Mammary epithelial cell (primary cell): ENCODE measurements at regions of chr9 and their contacts with region 1.

Region 1: GRCh38 chr9:100598641-100599145 is 20.8 kb downstream of the CAVIN4 start:
- DNase-seq: peak; percentile 78
- H3K4me3 ChIP-seq: peak overlapping the region; percentile 46 to 71 (median 54)
- H3K27ac ChIP-seq: no peak overlapping the region
- H3K4me1 ChIP-seq: peaks cover 11% of the 10 kb centered on the region
- H3K27me3 ChIP-seq: no peaks in the 10 kb centered on the region
- CTCF ChIP-seq: no peak

Region 2: DNA sequence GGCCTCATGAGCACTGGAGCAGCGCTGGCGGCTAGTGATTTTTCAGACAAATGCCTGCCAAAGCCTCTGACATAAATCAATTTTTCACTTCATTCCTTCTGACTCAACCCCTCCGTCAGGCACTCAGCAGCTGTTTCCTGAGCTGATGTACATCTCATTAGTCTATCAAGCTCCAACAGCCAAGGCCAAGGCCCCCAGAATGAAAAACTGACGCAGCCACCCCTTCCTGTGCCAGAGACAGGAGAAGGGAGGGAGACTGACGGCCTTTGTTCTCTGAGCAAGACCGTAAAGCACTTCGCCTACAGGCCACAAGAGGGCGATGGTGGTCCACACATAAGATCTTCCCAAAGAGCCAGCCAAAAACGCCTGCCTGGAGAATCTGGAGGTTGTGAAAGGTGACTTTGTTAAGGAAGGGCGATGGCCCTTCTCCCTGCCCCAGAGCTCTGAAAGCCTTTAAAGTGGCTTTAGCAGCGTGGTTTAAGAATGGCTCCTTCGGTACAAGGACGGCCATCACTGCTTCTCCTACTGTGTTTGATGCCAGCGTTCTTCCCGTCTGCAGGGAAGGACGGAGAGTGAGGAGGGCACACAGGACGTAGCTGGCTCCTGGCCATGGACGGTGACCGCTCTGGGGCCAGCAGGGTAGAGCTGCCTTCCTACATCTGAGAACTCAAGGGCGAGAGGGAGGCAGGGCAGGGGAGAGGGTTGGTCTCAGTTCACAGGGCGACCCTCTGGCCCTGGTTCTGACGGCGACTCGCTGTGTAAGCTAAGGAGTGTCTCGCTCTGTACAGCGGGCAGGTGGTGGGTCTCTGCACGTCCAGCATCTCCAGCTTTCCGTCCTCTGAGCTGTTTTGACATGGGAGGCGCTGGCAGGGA is 1414.0 kb before region 1 on chr9:
- CTCF ChIA-PET with region 1: no interaction called
- dilution Hi-C with region 1: no loop called
- in situ Hi-C with region 1: no loop called
- intact Hi-C with region 1: loop called (anchors 1 kb)
- DNase-seq: peak; percentile 77
- H3K4me3 ChIP-seq: no peak overlapping the region
- H3K27ac ChIP-seq: no peak overlapping the region
- H3K4me1 ChIP-seq: no peaks in the 10 kb centered on the region
- H3K27me3 ChIP-seq: no peaks in the 10 kb centered on the region
- CTCF ChIP-seq: peak; percentile 95

Region 3: DNA sequence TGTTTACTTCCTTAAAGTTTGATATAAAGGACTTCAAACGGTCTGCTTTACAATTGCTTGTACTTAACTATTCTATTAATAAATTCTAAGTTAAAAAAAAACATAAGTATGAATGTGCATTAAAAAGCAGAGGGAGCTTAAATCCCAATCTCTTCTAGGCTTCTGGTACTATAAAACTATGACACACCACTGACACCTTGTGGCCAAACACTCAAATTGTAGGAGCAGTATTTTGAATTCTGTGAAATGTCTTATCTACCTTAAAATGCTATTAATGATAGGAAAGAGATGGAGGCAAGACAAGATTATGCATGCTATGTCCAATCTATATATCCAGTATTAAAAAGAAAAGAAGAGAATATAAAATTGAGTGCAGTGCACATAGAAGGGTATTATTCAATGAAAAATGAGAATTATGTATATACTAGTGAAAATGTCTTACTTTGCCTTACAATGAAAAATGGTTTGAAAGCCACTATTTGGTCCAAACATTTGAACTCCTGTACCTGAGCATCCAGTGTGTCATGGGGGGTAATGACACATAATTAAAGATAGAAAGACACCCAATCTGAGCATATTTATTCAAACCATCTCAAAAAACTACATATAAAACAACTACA is 587.5 kb before region 1 on chr9:
- CTCF ChIA-PET with region 1: no interaction called
- dilution Hi-C with region 1: no loop called
- in situ Hi-C with region 1: loop called in 1 of 2 experiments (anchors 25 kb)
- intact Hi-C with region 1: no loop called
- DNase-seq: peak; percentile 29
- H3K4me3 ChIP-seq: no peak overlapping the region
- H3K27ac ChIP-seq: no peak overlapping the region
- H3K4me1 ChIP-seq: no peaks in the 10 kb centered on the region
- H3K27me3 ChIP-seq: no peaks in the 10 kb centered on the region
- CTCF ChIP-seq: peak; percentile 60 to 69

Region 4: GRCh38 chr9:100322954-100323536 is 275.6 kb before region 1 on chr9:
- CTCF ChIA-PET with region 1: no interaction called
- dilution Hi-C with region 1: no loop called
- in situ Hi-C with region 1: loop called in 1 of 2 experiments (anchors 25 kb)
- intact Hi-C with region 1: loop called (anchors 1 kb)
- DNase-seq: peak; percentile 20
- H3K4me3 ChIP-seq: no peak overlapping the region
- H3K27ac ChIP-seq: no peak overlapping the region
- H3K4me1 ChIP-seq: peaks cover 3% of the 10 kb centered on the region
- H3K27me3 ChIP-seq: no peaks in the 10 kb centered on the region
- CTCF ChIP-seq: peak; percentile 59 to 63

Region 5: GRCh38 chr9:100426530-100427428 is 171.9 kb before region 1 on chr9 and contains the start of gene MSANTD3:
- CTCF ChIA-PET with region 1: no interaction called
- dilution Hi-C with region 1: loop called (anchors 25 kb)
- in situ Hi-C with region 1: loop called in 1 of 2 experiments (anchors 25 kb)
- intact Hi-C with region 1: loop called (anchors 5 kb)
- DNase-seq: peak; percentile 76
- H3K4me3 ChIP-seq: peak within 1 kb of the TSS; percentile 63 to 74 (median 69)
- H3K27ac ChIP-seq: peak within 1 kb of the TSS; percentile 95
- H3K4me1 ChIP-seq: peaks cover 37% of the 10 kb centered on the region
- H3K27me3 ChIP-seq: no peaks in the 10 kb centered on the region
- CTCF ChIP-seq: no peak
- total RNA-seq, gene MSANTD3: 44.3 to 74.0 TPM

Region 6: GRCh38 chr9:101119206-101119819 is 520.6 kb after region 1 on chr9:
- CTCF ChIA-PET with region 1: interaction called, 3 read pairs
- dilution Hi-C with region 1: no loop called
- in situ Hi-C with region 1: no loop called
- intact Hi-C with region 1: loop called (anchors 5 kb)
- DNase-seq: peak; percentile 41
- H3K4me3 ChIP-seq: no peak overlapping the region
- H3K27ac ChIP-seq: no peak overlapping the region
- H3K4me1 ChIP-seq: no peaks in the 10 kb centered on the region
- H3K27me3 ChIP-seq: no peaks in the 10 kb centered on the region
- CTCF ChIP-seq: peak; percentile 89 to 93

Region 7: DNA sequence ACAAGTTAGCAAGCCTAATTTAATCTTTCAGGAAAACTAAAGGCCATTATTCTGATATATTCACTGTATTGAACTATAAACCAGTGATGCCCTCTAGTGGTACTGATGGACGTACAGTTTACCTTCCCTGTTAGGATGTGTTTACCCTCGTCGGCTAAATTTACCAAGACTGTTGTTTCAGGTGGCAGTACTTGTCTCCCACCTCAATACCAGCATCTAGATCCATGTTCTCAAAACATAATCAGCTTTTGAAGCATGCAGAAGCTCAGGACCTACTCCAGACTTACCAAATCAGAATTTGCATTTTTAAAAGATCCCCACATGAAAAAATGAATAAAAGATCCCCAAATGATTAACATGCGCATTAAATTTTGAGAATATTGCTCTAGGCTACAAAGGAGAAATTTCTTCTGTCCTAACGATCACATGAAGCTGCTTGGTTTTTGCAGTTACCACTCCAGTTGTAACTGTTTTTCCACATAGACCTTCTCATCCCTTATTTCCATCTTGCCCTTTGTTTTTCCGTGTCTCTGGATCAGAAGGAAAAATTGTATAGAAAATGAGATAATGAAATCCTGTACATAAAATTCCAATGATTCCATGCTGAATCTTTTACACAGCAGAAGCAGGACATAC is 789.3 kb after region 1 on chr9:
- CTCF ChIA-PET with region 1: interaction called, 5 read pairs
- dilution Hi-C with region 1: no loop called
- in situ Hi-C with region 1: no loop called
- intact Hi-C with region 1: loop called (anchors 1 kb)
- DNase-seq: peak; percentile 32
- H3K4me3 ChIP-seq: no peak overlapping the region
- H3K27ac ChIP-seq: no peak overlapping the region
- H3K4me1 ChIP-seq: no peaks in the 10 kb centered on the region
- H3K27me3 ChIP-seq: no peaks in the 10 kb centered on the region
- CTCF ChIP-seq: peak; percentile 55 to 72